Activated T-helper 2 cell treated with anti-CD3 and anti-CD28 coated beads, Interferon-gamma antibody, Interleukin-2, Interleukin-4, amounts not matched to agents 10 μg/mL and 5 μg/mL and 100 μg/mL, durations not matched to agents 14 hours and 24 hours and 36 hours (primary cell): ENCODE measurements at regions of chr4 and their contacts with region 1.

Region 1: DNA sequence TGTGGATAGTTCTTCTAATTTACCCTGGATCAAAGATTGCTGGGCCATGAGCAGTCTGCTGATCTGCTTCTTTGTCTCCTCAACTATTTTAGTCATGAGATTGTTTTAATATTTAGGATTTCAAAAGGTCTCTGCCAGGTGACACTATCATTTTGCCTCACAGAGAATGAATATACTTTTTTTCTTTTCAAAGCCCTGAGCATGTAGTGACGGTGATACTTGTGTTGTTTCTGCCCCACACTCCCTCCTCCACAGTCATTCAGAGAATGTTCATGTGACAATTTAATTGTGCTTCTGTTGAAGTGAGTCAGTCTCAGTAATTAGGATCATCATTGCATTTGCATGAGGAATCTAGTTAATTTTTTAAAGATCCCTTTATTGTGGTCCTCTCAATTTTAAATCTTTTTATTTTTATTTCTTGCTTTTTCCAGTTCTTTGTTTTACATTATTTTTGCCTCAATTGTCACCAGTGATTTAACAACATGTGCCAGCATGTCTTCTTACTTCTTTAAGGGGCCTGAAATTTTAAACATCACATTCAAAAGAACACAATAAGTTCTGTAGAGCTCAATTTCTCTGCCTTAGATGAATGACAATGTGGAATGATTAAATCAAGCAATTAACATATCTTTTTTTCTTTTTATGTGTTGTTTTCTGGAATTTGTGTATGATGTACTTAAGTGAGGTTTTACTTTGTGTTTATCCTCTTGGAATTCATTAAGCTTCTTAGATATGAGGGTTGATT is 12.3 kb downstream of the MMRN1 start:
- DNase-seq: no peak
- H3K4me3 Mint-ChIP-seq: no peak overlapping the region
- H3K27ac Mint-ChIP-seq: no peak overlapping the region
- H3K4me1 Mint-ChIP-seq: no peaks in the 10 kb centered on the region
- H3K27me3 Mint-ChIP-seq: peaks cover 10% of the 10 kb centered on the region

Region 2: GRCh38 chr4:89009115-89009514 is 897.8 kb before region 1 on chr4:
- intact Hi-C with region 1: no loop called
- DNase-seq: no peak
- H3K4me3 Mint-ChIP-seq: no peak overlapping the region
- H3K27ac Mint-ChIP-seq: no peak overlapping the region
- H3K4me1 Mint-ChIP-seq: no peaks in the 10 kb centered on the region
- H3K27me3 Mint-ChIP-seq: peaks cover 2% of the 10 kb centered on the region

Region 3: GRCh38 chr4:89158884-89159503 is 748.0 kb before region 1 on chr4:
- intact Hi-C with region 1: loop called (anchors 10 kb)
- DNase-seq: no peak
- H3K4me3 Mint-ChIP-seq: no peak overlapping the region
- H3K27ac Mint-ChIP-seq: no peak overlapping the region
- H3K4me1 Mint-ChIP-seq: no peaks in the 10 kb centered on the region
- H3K27me3 Mint-ChIP-seq: peaks cover 16% of the 10 kb centered on the region

Region 4: GRCh38 chr4:89226665-89227574 is 680.0 kb before region 1 on chr4:
- intact Hi-C with region 1: loop called (anchors 5 kb)
- DNase-seq: peak; percentile 57
- H3K4me3 Mint-ChIP-seq: no peak overlapping the region
- H3K27ac Mint-ChIP-seq: no peak overlapping the region
- H3K4me1 Mint-ChIP-seq: peaks cover 12% of the 10 kb centered on the region
- H3K27me3 Mint-ChIP-seq: no peaks in the 10 kb centered on the region

Region 5: DNA sequence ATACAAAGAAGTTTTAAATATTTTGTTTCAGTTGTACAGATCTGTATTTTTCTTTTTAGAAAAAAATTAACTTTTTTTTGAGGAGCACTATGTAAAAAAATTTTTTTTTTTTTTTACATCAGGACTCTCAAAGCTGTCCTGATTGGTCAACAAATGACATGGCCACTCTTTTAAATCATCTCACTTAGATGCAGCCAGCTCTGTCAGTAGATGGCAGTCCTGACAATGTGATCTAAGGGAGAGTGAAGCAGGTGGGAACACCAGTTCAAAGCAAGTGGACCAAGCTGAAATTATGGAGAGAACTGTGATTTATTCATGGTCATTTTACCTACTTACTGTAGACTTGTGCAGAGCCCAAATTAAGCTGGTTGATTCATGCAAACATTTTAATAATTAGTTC is 424.7 kb before region 1 on chr4:
- intact Hi-C with region 1: loop called (anchors 10 kb)
- DNase-seq: no peak
- H3K4me3 Mint-ChIP-seq: no peak overlapping the region
- H3K27ac Mint-ChIP-seq: no peak overlapping the region
- H3K4me1 Mint-ChIP-seq: no peaks in the 10 kb centered on the region
- H3K27me3 Mint-ChIP-seq: no peaks in the 10 kb centered on the region

Region 6: GRCh38 chr4:89586864-89587263 is 320.1 kb before region 1 on chr4:
- intact Hi-C with region 1: loop called (anchors 5 kb)
- DNase-seq: no peak
- H3K4me3 Mint-ChIP-seq: no peak overlapping the region
- H3K27ac Mint-ChIP-seq: no peak overlapping the region
- H3K4me1 Mint-ChIP-seq: no peaks in the 10 kb centered on the region
- H3K27me3 Mint-ChIP-seq: peaks cover 16% of the 10 kb centered on the region

Region 7: GRCh38 chr4:89788206-89789072 is 118.5 kb before region 1 on chr4:
- intact Hi-C with region 1: no loop called
- DNase-seq: no peak
- H3K4me3 Mint-ChIP-seq: no peak overlapping the region
- H3K27ac Mint-ChIP-seq: no peak overlapping the region
- H3K4me1 Mint-ChIP-seq: no peaks in the 10 kb centered on the region
- H3K27me3 Mint-ChIP-seq: no peaks in the 10 kb centered on the region